Right ventricle myocardium superior (tissue), 1 donor: ENCODE measurements at regions of chr4 and their contacts with region 1.

Region 1: DNA sequence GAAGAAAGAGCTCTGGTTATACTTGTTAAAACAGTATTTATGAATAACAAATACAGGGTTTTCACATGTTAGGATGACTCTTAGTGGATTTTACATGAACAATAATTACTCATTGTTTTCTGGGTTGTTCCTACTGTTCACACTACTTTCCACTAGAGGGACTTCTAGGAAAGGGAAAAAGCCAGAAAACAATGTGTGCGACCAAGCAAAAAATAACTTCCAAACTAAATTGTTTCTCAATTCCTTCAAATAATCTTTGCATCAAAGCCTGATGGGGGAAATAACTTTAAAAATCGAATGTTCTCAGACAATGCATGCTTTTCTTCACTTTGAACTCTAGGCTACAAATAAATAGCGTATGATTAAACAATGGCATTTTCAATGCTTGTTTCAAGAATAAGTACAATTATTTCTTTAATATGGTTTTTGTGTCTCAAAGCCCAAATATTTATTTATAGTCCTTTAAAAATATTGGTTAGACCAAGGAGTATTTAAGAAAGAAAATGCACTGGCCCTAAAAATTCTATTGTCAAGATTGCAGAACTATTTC is 72.1 kb upstream of the ETNPPL start:
- DNase-seq: no peak
- ATAC-seq: no peak

Region 2: GRCh38 chr4:108210989-108211835 is 623.7 kb before region 1 on chr4:
- intact Hi-C with region 1: no loop called
- DNase-seq: no peak
- ATAC-seq: no peak

Region 3: GRCh38 chr4:109389369-109390114 is 554.6 kb after region 1 on chr4:
- intact Hi-C with region 1: no loop called
- DNase-seq: no peak
- ATAC-seq: peak; percentile 77

Region 4: DNA sequence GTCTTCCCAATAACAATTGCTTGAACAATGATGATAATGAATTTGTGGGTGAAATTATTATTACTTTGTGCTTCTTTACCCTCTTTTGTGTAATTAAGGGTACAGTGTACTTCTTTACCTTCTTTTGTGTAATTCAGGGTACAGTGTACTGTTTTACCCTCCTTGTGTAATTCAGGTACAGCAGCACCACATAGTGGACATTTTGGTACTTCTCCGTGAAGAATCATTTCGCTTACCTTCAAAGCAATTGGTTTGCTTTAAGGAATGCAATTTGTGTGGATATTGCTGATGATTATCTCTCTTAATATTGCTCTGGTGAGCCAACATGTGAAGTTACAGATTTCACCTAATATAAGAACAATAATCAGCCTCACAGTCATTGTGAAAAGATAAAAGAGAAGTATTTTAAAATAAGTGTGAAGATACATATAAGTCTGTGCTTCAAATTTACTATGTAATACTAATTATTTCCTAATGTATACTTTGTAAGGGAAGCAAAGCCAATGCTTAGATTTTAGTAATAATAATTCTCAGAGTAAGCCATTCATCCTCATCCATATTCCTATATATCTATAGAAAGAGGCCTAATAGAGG is 571.5 kb after region 1 on chr4:
- intact Hi-C with region 1: loop called (anchors 5 kb)
- DNase-seq: no peak
- ATAC-seq: peak; percentile 80

Region 5: GRCh38 chr4:109411964-109412363 is 577.1 kb after region 1 on chr4:
- intact Hi-C with region 1: loop called (anchors 5 kb)
- DNase-seq: peak; percentile 77
- ATAC-seq: peak; percentile 91

Region 6: DNA sequence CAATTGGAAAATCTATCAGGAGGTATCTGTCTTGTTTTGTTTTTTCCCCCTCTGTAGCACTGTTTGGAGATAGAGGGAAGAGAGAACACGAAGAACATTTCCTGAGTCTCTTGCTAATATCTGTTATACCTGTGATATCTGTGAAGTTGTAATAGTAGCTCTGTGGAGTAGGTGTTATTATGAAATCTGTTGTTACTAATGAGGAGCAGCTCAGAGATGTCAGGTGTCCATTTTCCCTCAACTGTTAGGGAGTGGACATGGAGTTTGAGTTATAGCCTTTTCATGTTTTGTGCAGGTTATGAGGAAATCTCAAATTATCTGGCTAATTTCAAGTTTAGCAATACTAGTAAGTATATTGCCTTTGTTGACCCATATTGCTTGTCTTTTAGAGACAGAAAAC is 651.1 kb after region 1 on chr4:
- intact Hi-C with region 1: no loop called
- DNase-seq: no peak
- ATAC-seq: no peak